Heart left ventricle (tissue), 16 donors: ENCODE measurements at regions of chr1 and their contacts with region 1.

Region 1: GRCh38 chr1:184563308-184563707 is 176.5 kb downstream of the C1orf21 start:
- DNase-seq: no peak
- ATAC-seq: peak in 3 of 4 donors; percentile 26 to 63 (median 53)
- H3K4me3 ChIP-seq: no peak overlapping the region
- H3K27ac ChIP-seq: peak overlapping the region in 9 of 12 donors; percentile 15 to 73 (median 56)
- H3K4me1 ChIP-seq: peaks cover 0 to 38% (median 30%) of the 10 kb centered on the region in 12 donors
- H3K27me3 ChIP-seq: no peaks in the 10 kb centered on the region
- CTCF ChIP-seq: peak; percentile 16 to 77 (median 62)
- POLR2A ChIP-seq: no peak

Region 2: DNA sequence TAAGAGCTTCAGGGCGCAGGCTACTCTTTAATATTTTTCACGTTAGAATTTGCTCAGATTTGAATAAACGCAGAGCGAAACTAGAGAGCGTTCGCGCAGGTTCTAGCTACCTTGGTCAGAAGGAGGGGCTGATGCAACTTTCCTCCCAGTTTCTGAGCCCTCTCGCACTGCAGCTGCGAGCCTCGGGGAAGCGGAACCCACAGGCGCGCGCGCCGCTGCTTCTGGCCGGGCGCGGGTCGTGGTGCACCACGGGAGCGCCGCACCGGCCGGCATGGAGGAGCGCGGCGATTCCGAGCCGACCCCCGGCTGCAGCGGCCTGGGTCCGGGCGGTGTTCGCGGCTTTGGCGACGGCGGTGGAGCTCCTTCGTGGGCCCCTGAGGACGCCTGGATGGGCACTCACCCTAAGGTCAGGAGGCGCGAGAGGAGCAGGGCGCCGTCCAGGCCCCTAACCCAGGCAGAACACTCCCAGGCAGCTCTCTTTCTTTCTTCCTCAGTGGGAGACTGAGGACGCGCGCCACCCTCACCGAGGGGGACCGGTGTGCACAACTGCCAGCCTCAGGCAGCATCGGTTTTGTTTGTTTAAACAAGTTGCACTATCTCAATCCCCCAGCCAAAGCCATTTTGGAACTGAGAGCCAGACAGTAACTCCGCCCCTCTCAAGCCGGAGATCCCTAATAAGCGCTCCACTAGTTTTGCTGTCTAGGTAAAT is 511.7 kb before region 1 on chr1 and contains the start of gene TSEN15:
- intact Hi-C with region 1: no loop called
- DNase-seq: peak; percentile 75 to 91 (median 82)
- ATAC-seq: peak; percentile 95 to 99 (median 98)
- H3K4me3 ChIP-seq: peak within 1 kb of the TSS; percentile 75 to 96 (median 88)
- H3K27ac ChIP-seq: peak within 1 kb of the TSS; percentile 40 to 93 (median 88)
- H3K4me1 ChIP-seq: peaks cover 2 to 29% (median 22%) of the 10 kb centered on the region in 12 donors
- H3K27me3 ChIP-seq: no peaks in the 10 kb centered on the region
- CTCF ChIP-seq: peak in 1 of 12 donors; percentile 21
- POLR2A ChIP-seq: peak in 1 of 2 donors; percentile 58
- total RNA-seq, gene TSEN15: 23.5 to 32.3 (median 26.4) TPM

Region 3: GRCh38 chr1:184082541-184083415 is 480.5 kb before region 1 on chr1:
- intact Hi-C with region 1: loop called (anchors 5 to 10 kb)
- DNase-seq: no peak
- ATAC-seq: no peak
- H3K4me3 ChIP-seq: no peak overlapping the region
- H3K27ac ChIP-seq: no peak overlapping the region
- H3K4me1 ChIP-seq: peaks cover 0 to 19% (median 6%) of the 10 kb centered on the region in 12 donors
- H3K27me3 ChIP-seq: no peaks in the 10 kb centered on the region
- CTCF ChIP-seq: no peak
- POLR2A ChIP-seq: no peak

Region 4: GRCh38 chr1:184242507-184242943 is 320.8 kb before region 1 on chr1:
- intact Hi-C with region 1: loop called (anchors 5 to 10 kb)
- DNase-seq: peak in 1 of 5 donors; percentile 19
- ATAC-seq: peak; percentile 82 to 92 (median 86)
- H3K4me3 ChIP-seq: no peak overlapping the region
- H3K27ac ChIP-seq: peak overlapping the region in 3 of 12 donors; percentile 24 to 59 (median 35)
- H3K4me1 ChIP-seq: peaks cover 0 to 20% (median 4%) of the 10 kb centered on the region in 12 donors
- H3K27me3 ChIP-seq: no peaks in the 10 kb centered on the region
- CTCF ChIP-seq: peak; percentile 0 to 66 (median 49)
- POLR2A ChIP-seq: no peak

Region 5: GRCh38 chr1:184296466-184297243 is 266.7 kb before region 1 on chr1:
- intact Hi-C with region 1: loop called in 1 of 10 experiments (anchors 10 kb)
- DNase-seq: peak; percentile 83 to 96 (median 95)
- ATAC-seq: peak; percentile 91 to 95 (median 93)
- H3K4me3 ChIP-seq: peak overlapping the region in 7 of 12 donors; percentile 0 to 27 (median 21)
- H3K27ac ChIP-seq: peak overlapping the region; percentile 79 to 92 (median 86)
- H3K4me1 ChIP-seq: peaks cover 2 to 58% (median 39%) of the 10 kb centered on the region in 12 donors
- H3K27me3 ChIP-seq: no peaks in the 10 kb centered on the region
- CTCF ChIP-seq: no peak
- POLR2A ChIP-seq: no peak

Region 6: DNA sequence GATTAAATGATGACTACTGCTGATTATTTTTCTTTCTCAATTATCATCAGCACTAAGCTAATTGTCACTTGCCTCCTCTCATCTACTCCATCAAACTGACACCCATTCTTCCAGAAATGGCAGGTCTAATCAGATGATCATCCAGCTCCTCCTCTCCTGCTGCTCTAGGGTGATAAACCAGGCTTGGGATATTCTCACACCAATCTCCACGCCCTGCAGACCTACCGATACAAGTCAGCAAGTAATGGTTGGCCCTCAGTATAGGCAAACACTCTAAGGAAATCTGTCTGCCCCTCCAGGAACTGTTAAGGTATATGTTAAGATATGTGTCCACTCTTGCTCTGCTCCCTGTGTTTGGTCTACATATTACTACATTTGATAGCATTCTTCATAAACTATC is 212.7 kb before region 1 on chr1:
- intact Hi-C with region 1: no loop called
- DNase-seq: no peak
- ATAC-seq: no peak
- H3K4me3 ChIP-seq: no peak overlapping the region
- H3K27ac ChIP-seq: no peak overlapping the region
- H3K4me1 ChIP-seq: no peaks in the 10 kb centered on the region
- H3K27me3 ChIP-seq: no peaks in the 10 kb centered on the region
- CTCF ChIP-seq: no peak
- POLR2A ChIP-seq: no peak

Region 7: DNA sequence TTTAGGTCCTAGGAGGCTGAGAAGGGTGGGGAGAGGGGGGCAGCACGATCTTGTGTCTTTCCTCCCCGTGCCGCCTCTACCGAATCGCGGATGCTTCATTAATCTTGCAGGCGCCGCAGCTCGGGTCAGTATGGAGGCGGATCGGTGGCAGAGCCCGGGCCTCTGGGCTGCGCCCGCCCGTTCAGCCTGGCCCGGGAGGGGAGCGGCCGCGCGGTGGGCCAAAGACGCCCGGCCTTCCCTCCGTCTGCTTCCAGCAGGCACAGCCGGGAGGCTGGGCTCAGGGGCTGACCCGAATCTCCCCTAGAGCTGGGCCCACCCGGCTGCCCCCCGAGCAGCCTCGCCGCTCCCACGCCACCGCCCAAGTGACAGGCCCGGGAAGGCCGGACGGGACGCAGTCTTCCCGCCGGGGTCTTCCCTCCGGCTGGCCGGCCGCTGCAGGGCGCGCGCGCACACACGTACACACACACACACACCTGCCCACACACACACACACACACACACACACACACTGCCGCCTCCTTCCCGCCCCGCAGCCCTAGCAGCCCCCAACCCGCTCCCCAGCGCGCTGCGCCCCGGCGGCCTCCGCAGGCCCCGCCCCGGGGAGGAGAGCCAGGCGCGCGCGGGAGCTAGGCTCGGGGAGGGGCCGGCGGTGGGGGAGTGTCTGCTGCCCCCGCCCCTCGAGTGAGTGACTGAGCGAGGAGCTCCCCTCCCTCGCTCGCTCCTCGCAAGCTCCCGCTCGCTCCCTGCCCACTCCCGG is 176.8 kb before region 1 on chr1 and contains the start of gene C1orf21:
- intact Hi-C with region 1: loop called (anchors 2 to 5 kb)
- DNase-seq: peak; percentile 93 to 94 (median 93)
- ATAC-seq: peak; percentile 91 to 97 (median 95)
- H3K4me3 ChIP-seq: peak within 1 kb of the TSS; percentile 85 to 99 (median 94)
- H3K27ac ChIP-seq: peak within 1 kb of the TSS; percentile 84 to 97 (median 92)
- H3K4me1 ChIP-seq: peaks cover 0 to 38% (median 29%) of the 10 kb centered on the region in 12 donors
- H3K27me3 ChIP-seq: no peaks in the 10 kb centered on the region
- CTCF ChIP-seq: no peak
- POLR2A ChIP-seq: peak; percentile 80 to 94
- total RNA-seq, gene C1orf21: 57.5 to 81.3 (median 69.2) TPM

Region 8: DNA sequence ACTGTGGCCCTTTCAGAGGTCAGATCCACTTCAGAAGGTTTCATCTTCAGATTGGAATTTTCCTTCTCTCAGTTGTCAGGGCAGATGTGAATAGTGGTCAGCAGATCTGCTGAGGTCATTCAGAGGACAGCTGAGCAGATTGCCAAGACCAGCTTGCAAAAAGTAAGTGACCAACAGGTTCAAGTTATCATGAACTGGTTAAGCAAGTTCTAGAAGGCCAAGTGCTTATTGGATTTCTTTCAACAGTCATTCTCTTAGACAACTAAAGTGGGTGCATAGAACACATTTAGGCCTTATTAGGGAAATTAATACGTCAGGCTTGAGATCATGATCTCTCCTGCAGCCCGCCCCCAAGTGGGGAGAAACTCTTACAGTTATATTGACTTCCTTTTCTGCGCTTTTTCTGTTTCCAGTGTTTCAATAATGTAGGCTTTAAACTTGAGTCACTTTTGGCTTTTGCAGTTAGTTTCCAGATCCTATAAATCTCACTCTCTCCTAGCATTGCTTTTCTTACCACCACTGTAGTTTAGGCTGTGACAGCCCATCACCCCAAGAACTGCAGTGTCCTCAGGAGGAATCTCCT is 80.1 kb before region 1 on chr1:
- intact Hi-C with region 1: loop called in 5 of 10 experiments (anchors 5 to 10 kb)
- DNase-seq: peak in 2 of 5 donors; percentile 57
- ATAC-seq: peak in 3 of 4 donors; percentile 33 to 60 (median 33)
- H3K4me3 ChIP-seq: no peak overlapping the region
- H3K27ac ChIP-seq: peak overlapping the region; percentile 17 to 79 (median 70)
- H3K4me1 ChIP-seq: peaks cover 11 to 86% (median 71%) of the 10 kb centered on the region in 12 donors
- H3K27me3 ChIP-seq: no peaks in the 10 kb centered on the region
- CTCF ChIP-seq: peak in 7 of 12 donors; percentile 8 to 40 (median 21)
- POLR2A ChIP-seq: no peak

Region 9: DNA sequence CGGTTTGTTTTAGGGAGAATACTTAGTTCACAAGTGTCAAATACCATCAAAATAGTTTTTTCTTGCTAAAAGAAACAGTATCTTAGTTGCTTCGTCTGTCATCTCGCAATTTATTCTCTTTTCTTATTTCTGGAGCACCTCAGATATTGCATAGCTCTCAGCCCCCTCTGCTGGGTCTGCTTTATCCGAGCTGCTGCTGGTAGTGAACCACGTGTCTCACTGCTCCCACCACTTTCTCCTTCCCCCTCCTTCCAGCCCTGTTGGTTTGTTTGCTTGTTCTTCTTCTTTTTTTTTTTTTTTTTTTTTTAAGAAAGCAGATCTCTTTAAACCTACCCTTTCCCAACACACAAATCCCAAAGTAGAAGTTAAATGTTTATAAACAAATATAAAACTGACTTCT is 20.5 kb after region 1 on chr1:
- intact Hi-C with region 1: no loop called
- DNase-seq: no peak
- ATAC-seq: no peak
- H3K4me3 ChIP-seq: no peak overlapping the region
- H3K27ac ChIP-seq: no peak overlapping the region
- H3K4me1 ChIP-seq: peaks cover 0 to 5% (median 0%) of the 10 kb centered on the region in 12 donors
- H3K27me3 ChIP-seq: no peaks in the 10 kb centered on the region
- CTCF ChIP-seq: no peak
- POLR2A ChIP-seq: no peak

Region 10: GRCh38 chr1:184595591-184595990 is 32.3 kb after region 1 on chr1:
- intact Hi-C with region 1: no loop called
- DNase-seq: no peak
- ATAC-seq: no peak
- H3K4me3 ChIP-seq: no peak overlapping the region
- H3K27ac ChIP-seq: no peak overlapping the region
- H3K4me1 ChIP-seq: peaks cover 0 to 19% (median 9%) of the 10 kb centered on the region in 12 donors
- H3K27me3 ChIP-seq: no peaks in the 10 kb centered on the region
- CTCF ChIP-seq: no peak
- POLR2A ChIP-seq: no peak

Region 11: DNA sequence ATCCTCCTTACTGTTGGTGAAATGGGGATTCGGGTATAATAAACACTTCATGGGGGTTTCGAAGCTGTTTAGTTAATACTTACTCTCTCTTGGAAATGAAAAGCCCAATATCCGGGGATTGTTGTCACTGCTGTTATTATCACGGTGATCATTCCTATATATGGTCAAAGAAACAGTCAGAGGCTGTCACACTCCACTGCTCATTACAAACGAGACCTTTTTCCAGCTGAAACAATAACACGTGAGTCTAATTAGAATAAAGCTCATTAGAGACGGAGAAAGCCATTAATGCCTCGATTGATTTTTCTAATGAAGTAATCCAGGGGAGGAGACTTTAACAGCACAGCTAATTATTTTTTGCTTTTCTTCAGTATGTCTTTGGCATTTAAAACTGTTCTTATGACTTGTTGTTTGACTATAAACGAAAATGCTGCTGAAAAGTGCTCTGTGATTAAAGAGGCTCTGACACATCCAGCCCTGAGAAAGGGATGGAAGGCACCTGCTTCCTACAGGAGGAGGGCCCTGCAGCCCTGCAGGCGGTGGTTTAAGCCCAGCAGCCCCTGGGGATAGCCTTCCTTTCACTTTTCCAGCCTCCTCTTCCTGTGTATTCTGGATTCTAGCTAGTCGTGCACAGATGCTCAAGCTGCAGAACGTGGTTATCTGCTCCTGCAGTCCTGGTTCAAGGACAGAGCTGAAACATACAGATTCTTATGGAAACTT is 47.7 kb after region 1 on chr1:
- intact Hi-C with region 1: loop called in 1 of 10 experiments (anchors 10 kb)
- DNase-seq: peak in 3 of 5 donors; percentile 40 to 63 (median 50)
- ATAC-seq: peak; percentile 51 to 80 (median 70)
- H3K4me3 ChIP-seq: peak overlapping the region in 4 of 12 donors; percentile 7 to 22 (median 20)
- H3K27ac ChIP-seq: peak overlapping the region in 10 of 12 donors; percentile 32 to 82 (median 55)
- H3K4me1 ChIP-seq: peaks cover 0 to 45% (median 25%) of the 10 kb centered on the region in 12 donors
- H3K27me3 ChIP-seq: no peaks in the 10 kb centered on the region
- CTCF ChIP-seq: no peak
- POLR2A ChIP-seq: no peak